ENCODE measurements at regions of chr3 and their contacts with region 1.

Region 1: DNA sequence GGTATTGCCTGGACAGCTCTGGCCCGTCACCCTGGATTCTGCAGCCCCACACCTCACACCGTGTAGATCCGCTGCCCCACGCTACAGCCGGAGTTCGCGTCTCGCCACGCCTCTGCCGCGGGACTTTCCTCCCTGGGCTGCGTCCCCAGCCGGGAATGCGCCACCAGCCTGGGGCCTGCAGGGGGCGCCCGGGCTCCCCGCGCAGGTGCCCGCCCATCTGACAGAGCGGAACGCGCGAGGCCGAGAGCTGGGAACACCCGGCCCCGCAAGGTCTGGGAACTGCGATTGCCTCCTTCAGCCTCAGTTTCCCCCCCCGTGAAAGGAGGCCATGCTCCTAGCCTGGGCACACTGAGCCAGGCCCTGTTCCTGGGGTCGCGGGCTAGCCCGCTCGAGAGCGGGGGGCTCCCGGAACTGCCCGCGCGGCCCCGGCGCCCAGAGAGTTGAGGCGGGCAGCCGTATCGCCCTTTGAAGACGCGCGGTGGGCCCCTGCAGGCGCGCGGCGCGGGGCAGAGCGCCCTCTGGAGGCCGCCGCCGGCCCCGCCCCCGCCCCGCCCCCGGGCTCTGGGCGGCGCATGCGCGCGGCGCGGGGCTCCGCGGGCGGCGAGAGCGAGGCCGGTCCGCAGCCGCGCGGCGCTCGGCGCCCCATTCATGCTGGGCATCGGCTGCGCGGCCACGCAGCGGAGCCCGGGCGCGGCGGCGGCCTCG is at the start of gene PLXNA1:
- DNase-seq: peak; percentile 59 to 96
- H3K4me3 ChIP-seq: peak within 1 kb of the TSS; percentile 64
- CTCF ChIP-seq: peak in 2 of 3 donors; percentile 20 to 57
- POLR2A ChIP-seq: no peak
- total RNA-seq, gene PLXNA1: 35.8 to 44.9 (median 39.7) TPM

Region 2: GRCh38 chr3:126679318-126679751 is 303.3 kb before region 1 on chr3:
- intact Hi-C with region 1: loop called (anchors 5 kb)
- DNase-seq: peak; percentile 73 to 96
- H3K4me3 ChIP-seq: no peak overlapping the region
- CTCF ChIP-seq: peak in 1 of 3 donors; percentile 46
- POLR2A ChIP-seq: no peak

Region 3: DNA sequence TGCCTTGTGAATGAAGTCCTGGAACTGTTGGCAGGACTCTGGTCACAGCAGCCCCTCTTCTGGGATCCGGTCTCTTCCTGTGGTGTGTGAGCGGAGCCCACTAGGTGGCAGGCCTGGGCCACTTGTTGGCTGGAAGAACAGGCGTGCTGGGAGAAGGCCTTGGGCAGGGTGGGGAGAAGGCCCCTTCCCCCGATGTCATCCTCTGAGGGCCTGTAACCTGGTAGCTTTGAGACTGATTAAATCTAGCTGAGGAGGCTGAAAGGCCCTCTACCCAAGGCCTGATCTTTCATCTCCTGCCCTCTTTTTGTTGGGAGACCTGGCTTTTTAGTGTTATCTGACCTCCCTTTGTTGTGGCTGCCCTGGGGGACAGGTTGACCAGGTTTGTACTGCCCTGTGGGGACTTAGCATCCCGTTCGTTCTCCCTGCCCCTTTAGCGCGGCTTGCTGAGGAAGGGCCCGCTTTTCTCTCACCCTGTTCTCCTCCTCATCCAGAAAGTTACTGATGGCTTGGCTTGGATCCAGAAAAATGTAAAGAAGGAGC is 230.2 kb before region 1 on chr3:
- intact Hi-C with region 1: loop called (anchors 5 kb)
- DNase-seq: peak; percentile 70 to 94
- H3K4me3 ChIP-seq: no peak overlapping the region
- CTCF ChIP-seq: peak in 1 of 3 donors; percentile 73
- POLR2A ChIP-seq: no peak

Measured in lower leg skin (tissue), 4 donors.